Activated CD4-positive, alpha-beta memory T cell treated with anti-CD3 and anti-CD28 coated beads, Interleukin-2, amount 10 ng/mL, durations not matched to agents 7 days and 5 days (primary cell): ENCODE measurements at regions of chr13 and their contacts with region 1.

Region 1: DNA sequence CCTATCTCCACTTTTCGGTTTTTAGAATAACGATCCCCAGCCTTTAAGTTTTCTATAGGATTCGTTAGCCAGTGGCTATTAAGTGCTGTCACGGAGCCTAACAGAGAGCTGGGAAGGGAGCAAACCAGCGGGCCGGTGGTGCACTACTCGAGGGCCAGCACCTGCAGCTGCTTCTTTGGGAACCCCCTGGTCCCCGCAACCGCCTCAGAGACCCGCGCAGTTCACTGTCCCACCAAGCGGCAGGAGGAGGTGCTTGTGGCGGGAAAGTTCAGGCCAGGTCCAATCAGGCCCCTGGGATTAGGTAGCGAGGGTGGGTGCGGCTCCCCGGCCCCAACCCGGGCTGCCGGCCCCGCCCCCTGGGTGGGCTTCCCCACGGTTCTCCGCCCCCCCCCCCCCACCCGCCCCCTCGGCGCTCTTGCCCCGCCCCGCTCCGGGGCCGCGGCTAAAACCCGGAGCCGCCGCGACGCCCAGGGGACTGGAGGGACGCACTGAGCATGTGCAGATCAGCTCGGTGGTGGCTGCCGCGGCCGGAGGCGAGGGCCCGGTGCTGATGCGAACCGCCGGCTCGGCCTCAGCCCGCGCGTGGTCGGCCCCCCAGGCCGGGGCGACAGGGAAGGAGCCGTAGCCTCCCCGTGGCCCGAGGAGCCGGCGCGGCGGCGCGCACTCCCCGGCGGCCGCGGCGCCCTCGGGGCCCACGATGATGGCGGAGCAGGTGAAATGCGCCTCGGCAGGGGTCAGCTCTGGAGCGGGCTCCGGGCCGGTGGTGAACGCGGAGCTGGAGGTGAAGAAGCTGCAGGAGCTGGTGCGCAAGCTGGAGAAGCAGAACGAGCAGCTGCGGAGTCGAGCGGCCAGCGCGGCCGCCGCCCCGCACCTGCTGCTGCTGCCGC is at the start of gene SLAIN1:
- DNase-seq: peak; percentile 80
- H3K4me3 Mint-ChIP-seq: peak within 1 kb of the TSS; percentile 95
- H3K27ac Mint-ChIP-seq: no peak within 1 kb of the TSS
- H3K4me1 Mint-ChIP-seq: peaks cover 35% of the 10 kb centered on the region
- H3K27me3 Mint-ChIP-seq: peaks cover 21% of the 10 kb centered on the region
- total RNA-seq, gene SLAIN1: 31.0 to 33.6 TPM

Region 2: DNA sequence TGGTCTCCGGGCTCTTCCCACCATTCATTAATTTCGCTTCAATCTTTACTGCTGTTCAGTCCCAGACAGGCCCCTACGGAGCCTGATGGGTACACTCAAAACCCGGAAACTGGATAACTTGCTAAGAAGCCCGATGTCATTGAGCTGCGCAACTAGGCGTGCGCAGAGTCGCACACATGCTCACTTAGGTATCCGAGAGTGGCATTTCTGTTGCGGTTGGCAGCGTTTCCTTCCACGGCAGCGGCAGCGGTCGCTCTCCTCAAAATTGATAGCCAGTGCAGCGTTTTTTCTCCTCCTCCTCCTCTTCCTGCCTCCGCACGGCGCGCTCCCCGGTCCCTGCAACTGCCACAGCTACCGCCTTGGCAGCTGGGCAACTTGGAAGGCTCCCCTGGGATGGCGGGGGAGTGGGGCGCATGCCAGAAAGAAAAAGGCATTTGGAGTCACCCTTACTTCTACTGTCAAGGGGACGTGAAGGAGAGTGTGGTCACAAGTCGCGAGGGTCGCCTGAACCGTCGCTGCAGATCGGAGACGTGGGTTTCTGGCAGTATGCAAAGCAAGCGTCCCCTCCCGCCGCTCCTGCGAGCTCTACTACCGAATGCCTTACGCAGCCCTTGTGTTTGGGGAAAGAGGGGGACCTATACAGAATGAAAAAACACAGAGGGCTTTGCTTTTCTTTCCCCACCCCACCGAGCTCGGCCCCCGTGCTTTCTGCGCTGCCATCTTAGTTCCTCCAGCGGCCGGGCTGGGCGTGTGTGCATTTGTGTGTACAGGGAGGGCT is 368.1 kb before region 1 on chr13:
- CTCF ChIA-PET with region 1: no interaction called
- POLR2A ChIA-PET with region 1: interaction called, 14 read pairs
- DNase-seq: peak; percentile 95
- H3K4me3 Mint-ChIP-seq: peak overlapping the region; percentile 95
- H3K27ac Mint-ChIP-seq: peak overlapping the region; percentile 99
- H3K4me1 Mint-ChIP-seq: peaks cover 40% of the 10 kb centered on the region
- H3K27me3 Mint-ChIP-seq: no peaks in the 10 kb centered on the region

Region 3: GRCh38 chr13:77729502-77730221 is 32.2 kb after region 1 on chr13:
- CTCF ChIA-PET with region 1: no interaction called
- POLR2A ChIA-PET with region 1: interaction called, 19 read pairs
- DNase-seq: peak; percentile 62
- H3K4me3 Mint-ChIP-seq: peak overlapping the region; percentile 49
- H3K27ac Mint-ChIP-seq: peak overlapping the region; percentile 80
- H3K4me1 Mint-ChIP-seq: peaks cover 33% of the 10 kb centered on the region
- H3K27me3 Mint-ChIP-seq: no peaks in the 10 kb centered on the region